Naive thymus-derived CD4-positive, alpha-beta T cell (primary cell): ENCODE measurements at regions of chr12 and their contacts with region 1.

Region 1: DNA sequence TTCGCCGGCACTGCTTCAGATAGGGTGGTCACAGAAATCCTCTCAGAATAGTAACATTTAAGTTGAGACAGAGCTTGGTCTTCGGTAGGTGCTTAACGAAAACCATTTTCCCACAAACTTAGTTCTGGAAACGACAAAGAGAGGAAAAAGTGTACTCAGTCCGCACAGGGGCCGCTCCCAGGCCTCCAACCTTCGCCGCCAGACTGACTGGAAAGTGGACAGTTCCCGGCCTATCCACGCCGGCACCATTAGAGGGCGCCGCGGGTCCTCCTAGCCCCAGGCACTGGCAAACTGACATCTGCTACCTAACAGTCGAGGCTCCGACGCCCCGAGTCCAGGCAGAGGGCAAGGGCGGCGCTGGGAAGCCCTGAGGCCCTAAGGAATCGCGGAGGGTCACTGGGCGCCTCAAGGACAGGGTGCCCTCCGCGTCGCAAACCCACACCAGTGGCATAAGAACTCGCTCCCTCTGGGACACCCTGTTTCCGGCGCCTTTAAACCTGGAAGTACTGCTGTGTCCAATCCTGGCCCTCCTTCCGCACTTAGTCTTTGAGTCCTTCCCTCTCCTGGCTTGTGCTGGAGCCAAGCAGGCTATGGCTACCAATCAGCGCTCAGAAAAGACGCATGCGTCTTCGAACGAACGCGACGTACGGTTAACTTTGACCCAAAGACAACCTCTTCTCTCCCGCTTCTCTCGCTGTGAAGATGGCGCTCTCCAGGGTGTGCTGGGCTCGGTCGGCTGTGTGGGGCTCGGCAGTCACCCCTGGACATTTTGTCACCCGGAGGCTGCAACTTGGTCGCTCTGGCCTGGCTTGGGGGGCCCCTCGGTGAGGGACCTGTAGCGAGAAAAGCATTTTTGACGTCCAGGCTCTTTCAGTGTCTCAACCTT is at the start of gene LETMD1:
- DNase-seq: peak; percentile 81 to 96 (median 95)
- ATAC-seq: peak; percentile 97
- H3K4me3 ChIP-seq: peak within 1 kb of the TSS; percentile 75
- H3K4me3 Mint-ChIP-seq: peak within 1 kb of the TSS; percentile 93 to 98 (median 96)
- H3K27ac ChIP-seq: peak within 1 kb of the TSS; percentile 81
- H3K27ac Mint-ChIP-seq: peak within 1 kb of the TSS; percentile 93 to 99 (median 96)
- H3K4me1 ChIP-seq: peaks cover 20 to 23% of the 10 kb centered on the region in 2 donors
- H3K4me1 Mint-ChIP-seq: peaks cover 15 to 44% (median 36%) of the 10 kb centered on the region in 7 donors
- H3K27me3 ChIP-seq: no peaks in the 10 kb centered on the region
- H3K27me3 Mint-ChIP-seq: no peaks in the 10 kb centered on the region
- total RNA-seq, gene LETMD1: 58.8 to 101 (median 77.0) TPM

Region 2: GRCh38 chr12:51025836-51026638 is 21.9 kb before region 1 on chr12 and contains the start of gene SLC11A2:
- CTCF ChIA-PET with region 1: interaction called, 12 read pairs
- POLR2A ChIA-PET with region 1: interaction called, 5 read pairs
- intact Hi-C with region 1: loop called (anchors 1 kb)
- DNase-seq: peak; percentile 79 to 93 (median 88)
- ATAC-seq: peak; percentile 96
- H3K4me3 ChIP-seq: peak within 1 kb of the TSS; percentile 86
- H3K4me3 Mint-ChIP-seq: peak within 1 kb of the TSS; percentile 91 to 100 (median 98)
- H3K27ac ChIP-seq: peak within 1 kb of the TSS; percentile 80
- H3K27ac Mint-ChIP-seq: peak within 1 kb of the TSS; percentile 90 to 99 (median 97)
- H3K4me1 ChIP-seq: peaks cover 14 to 22% of the 10 kb centered on the region in 2 donors
- H3K4me1 Mint-ChIP-seq: peaks cover 39 to 65% (median 54%) of the 10 kb centered on the region in 7 donors
- H3K27me3 ChIP-seq: no peaks in the 10 kb centered on the region
- H3K27me3 Mint-ChIP-seq: peaks cover 0 to 13% (median 0%) of the 10 kb centered on the region in 5 donors
- total RNA-seq, gene SLC11A2: 49.3 to 65.4 (median 61.0) TPM

Region 3: DNA sequence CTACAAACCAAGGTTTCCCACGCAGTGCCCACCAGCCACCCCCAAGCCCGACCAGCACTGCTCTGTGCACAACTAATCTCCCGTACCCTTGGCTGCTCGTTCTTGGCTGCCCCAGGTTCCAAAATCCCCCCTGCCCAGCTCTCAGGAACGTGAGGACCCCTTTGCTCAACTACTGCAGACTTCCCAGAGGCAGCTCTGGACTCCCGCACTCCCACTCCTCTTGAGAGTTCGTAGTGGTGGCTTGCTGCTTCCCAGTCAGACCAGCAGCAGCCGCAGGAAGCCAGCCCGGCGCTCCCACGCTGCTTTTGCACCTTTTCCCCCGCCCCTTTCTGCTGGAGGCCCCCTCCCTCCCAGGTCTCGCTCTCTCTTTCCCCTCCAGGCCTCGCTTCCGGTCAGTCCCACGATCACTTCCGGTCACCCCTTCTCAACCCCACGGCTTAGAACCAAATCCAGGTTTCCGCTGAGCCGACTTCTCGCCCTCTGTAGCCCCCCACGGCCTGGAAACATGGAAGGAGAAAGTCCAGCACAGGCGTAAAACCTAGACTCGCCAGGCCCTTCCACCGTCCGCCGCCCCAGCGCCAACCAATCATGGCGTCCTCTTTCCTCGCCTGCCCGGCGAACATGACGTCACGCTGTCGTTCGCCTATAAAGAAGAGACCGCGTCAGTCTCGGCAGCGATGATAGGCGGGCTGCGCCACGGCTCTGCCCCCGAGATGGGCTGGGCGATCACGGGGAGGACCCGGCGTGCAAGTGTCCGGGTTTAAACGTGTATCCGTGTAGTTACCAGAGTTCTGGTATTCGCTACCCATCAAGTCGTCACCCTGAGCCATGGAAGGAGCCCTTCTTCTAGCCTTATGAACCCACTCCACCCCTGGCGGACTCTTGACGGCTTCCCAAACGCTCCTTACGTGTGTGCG is 124.9 kb after region 1 on chr12 and contains the start of gene TFCP2:
- CTCF ChIA-PET with region 1: no interaction called
- POLR2A ChIA-PET with region 1: no interaction called
- intact Hi-C with region 1: loop called (anchors 1 kb)
- DNase-seq: peak; percentile 81 to 93 (median 91)
- ATAC-seq: peak; percentile 98
- H3K4me3 ChIP-seq: peak within 1 kb of the TSS; percentile 98
- H3K4me3 Mint-ChIP-seq: peak within 1 kb of the TSS in 5 of 10 donors; percentile 77 to 89 (median 87)
- H3K27ac ChIP-seq: peak within 1 kb of the TSS; percentile 99
- H3K27ac Mint-ChIP-seq: peak within 1 kb of the TSS in 6 of 9 donors; percentile 56 to 90 (median 82)
- H3K4me1 ChIP-seq: peaks cover 5 to 7% of the 10 kb centered on the region in 2 donors
- H3K4me1 Mint-ChIP-seq: peaks cover 9 to 24% (median 14%) of the 10 kb centered on the region in 7 donors
- H3K27me3 ChIP-seq: no peaks in the 10 kb centered on the region
- H3K27me3 Mint-ChIP-seq: no peaks in the 10 kb centered on the region
- total RNA-seq, gene TFCP2: 23.4 to 42.3 (median 36.6) TPM

Region 4: DNA sequence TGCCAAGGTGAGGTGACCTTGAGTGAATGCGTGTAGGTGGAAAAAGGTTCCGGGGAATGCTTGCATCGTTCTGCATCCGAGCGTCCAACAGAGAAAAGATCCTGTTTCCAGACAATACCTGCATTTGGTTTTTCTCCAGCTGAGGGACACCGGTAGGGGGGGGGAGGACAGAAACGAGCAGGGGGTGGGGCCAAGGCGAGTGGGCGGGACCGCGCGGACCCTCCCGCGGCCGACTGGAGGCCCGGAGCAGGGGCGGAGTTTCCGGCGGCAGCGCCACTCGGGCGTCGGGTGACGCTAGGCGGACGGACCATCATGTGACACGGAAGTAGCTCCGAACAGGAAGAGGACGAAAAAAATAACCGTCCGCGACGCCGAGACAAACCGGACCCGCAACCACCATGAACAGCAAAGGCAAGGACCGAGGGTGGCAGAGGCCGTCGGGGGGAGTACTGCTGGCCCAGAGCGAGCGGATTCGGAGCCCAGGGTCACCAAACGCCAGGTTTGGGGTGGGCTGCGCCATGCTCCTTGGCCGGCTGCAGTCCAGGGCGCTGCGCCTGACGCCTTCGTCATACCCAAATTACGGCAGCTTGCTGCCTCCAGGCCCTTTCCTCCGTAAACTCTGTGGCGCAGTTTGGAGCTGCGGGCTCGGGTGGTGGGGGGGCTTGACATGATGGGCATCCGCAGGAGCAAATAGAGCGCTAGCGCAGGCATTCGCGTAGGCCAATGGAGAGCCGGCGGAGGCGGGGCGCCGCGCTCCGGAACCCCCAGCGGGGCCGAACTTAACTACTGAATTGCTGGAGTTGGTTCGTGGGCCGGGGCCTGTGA is 190.8 kb after region 1 on chr12 and contains the start of gene DAZAP2:
- CTCF ChIA-PET with region 1: no interaction called
- POLR2A ChIA-PET with region 1: interaction called, 3 read pairs
- intact Hi-C with region 1: loop called (anchors 1 kb)
- DNase-seq: peak; percentile 82 to 94 (median 92)
- ATAC-seq: peak; percentile 93
- H3K4me3 ChIP-seq: peak within 1 kb of the TSS; percentile 98
- H3K4me3 Mint-ChIP-seq: peak within 1 kb of the TSS; percentile 91 to 99 (median 97)
- H3K27ac ChIP-seq: peak within 1 kb of the TSS; percentile 100
- H3K27ac Mint-ChIP-seq: peak within 1 kb of the TSS; percentile 97 to 100 (median 100)
- H3K4me1 ChIP-seq: peaks cover 24 to 29% of the 10 kb centered on the region in 2 donors
- H3K4me1 Mint-ChIP-seq: peaks cover 36 to 50% (median 42%) of the 10 kb centered on the region in 7 donors
- H3K27me3 ChIP-seq: no peaks in the 10 kb centered on the region
- H3K27me3 Mint-ChIP-seq: peaks cover 0 to 4% (median 0%) of the 10 kb centered on the region in 5 donors
- total RNA-seq, gene DAZAP2: 231 to 306 (median 271) TPM

Region 5: GRCh38 chr12:51326762-51327439 is 279.0 kb after region 1 on chr12:
- CTCF ChIA-PET with region 1: no interaction called
- POLR2A ChIA-PET with region 1: no interaction called
- intact Hi-C with region 1: loop called in 1 of 2 experiments (anchors 5 kb)
- DNase-seq: peak in 2 of 9 donors; percentile 10 to 27
- ATAC-seq: peak; percentile 34
- H3K4me3 ChIP-seq: no peak overlapping the region
- H3K4me3 Mint-ChIP-seq: peak overlapping the region; percentile 49 to 85 (median 72)
- H3K27ac ChIP-seq: peak overlapping the region; percentile 60
- H3K27ac Mint-ChIP-seq: peak overlapping the region; percentile 76 to 96 (median 93)
- H3K4me1 ChIP-seq: peaks cover 51 to 67% of the 10 kb centered on the region in 2 donors
- H3K4me1 Mint-ChIP-seq: peaks cover 45 to 92% (median 67%) of the 10 kb centered on the region in 7 donors
- H3K27me3 ChIP-seq: no peaks in the 10 kb centered on the region
- H3K27me3 Mint-ChIP-seq: no peaks in the 10 kb centered on the region

Region 6: GRCh38 chr12:51351913-51352532 is 304.1 kb after region 1 on chr12:
- CTCF ChIA-PET with region 1: no interaction called
- POLR2A ChIA-PET with region 1: no interaction called
- intact Hi-C with region 1: loop called in 1 of 2 experiments (anchors 1 kb)
- DNase-seq: peak; percentile 8 to 64 (median 39)
- ATAC-seq: peak; percentile 89
- H3K4me3 ChIP-seq: no peak overlapping the region
- H3K4me3 Mint-ChIP-seq: no peak overlapping the region
- H3K27ac ChIP-seq: no peak overlapping the region
- H3K27ac Mint-ChIP-seq: peak overlapping the region in 4 of 9 donors; percentile 7 to 65 (median 22)
- H3K4me1 ChIP-seq: no peaks in the 10 kb centered on the region
- H3K4me1 Mint-ChIP-seq: peaks cover 0 to 10% (median 5%) of the 10 kb centered on the region in 7 donors
- H3K27me3 ChIP-seq: no peaks in the 10 kb centered on the region
- H3K27me3 Mint-ChIP-seq: peaks cover 0 to 4% (median 0%) of the 10 kb centered on the region in 5 donors

Region 7: GRCh38 chr12:51531978-51532497 is 484.1 kb after region 1 on chr12:
- CTCF ChIA-PET with region 1: no interaction called
- POLR2A ChIA-PET with region 1: no interaction called
- intact Hi-C with region 1: loop called in 1 of 2 experiments (anchors 5 kb)
- DNase-seq: peak; percentile 44 to 78 (median 68)
- ATAC-seq: peak; percentile 94
- H3K4me3 ChIP-seq: no peak overlapping the region
- H3K4me3 Mint-ChIP-seq: no peak overlapping the region
- H3K27ac ChIP-seq: no peak overlapping the region
- H3K27ac Mint-ChIP-seq: peak overlapping the region in 5 of 9 donors; percentile 11 to 52 (median 32)
- H3K4me1 ChIP-seq: peaks cover 0 to 4% of the 10 kb centered on the region in 2 donors
- H3K4me1 Mint-ChIP-seq: peaks cover 0 to 11% (median 6%) of the 10 kb centered on the region in 7 donors
- H3K27me3 ChIP-seq: no peaks in the 10 kb centered on the region
- H3K27me3 Mint-ChIP-seq: peaks cover 0 to 32% (median 4%) of the 10 kb centered on the region in 5 donors